Caco-2 (cell line): ENCODE measurements at regions of chr19 and their contacts with region 1.

Region 1: DNA sequence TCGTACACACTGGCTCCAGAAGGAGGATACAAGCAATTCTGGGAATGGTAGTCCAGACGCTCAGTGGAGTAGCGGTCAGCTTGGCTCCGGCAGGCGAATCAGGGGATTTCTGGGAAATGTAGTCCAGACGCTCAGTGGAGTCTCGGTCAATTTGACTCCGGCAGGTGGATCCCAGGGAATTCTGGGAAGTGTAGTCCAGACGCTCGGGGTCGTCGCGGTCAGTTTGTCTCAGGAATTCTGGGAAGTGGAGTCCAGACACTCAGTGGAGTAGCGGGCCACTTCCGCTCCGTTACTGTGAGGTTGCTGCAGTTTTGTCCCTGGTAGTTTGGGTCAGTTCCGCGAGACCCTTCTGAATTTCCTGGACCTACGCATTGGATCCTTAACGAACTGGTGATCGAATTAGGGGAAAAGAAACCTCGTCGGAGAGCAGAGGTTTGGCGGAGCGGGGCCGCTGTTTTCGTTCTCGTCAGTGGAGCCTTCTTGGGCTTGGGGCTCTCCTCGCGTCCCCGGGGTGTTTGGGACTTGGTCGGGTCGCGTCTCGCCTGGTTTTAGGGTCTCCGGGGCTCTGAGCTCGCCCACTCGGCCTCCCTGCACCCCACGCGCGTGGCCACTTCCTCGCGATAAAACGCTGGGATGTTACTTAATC is at the start of gene ZNF225:
- DNase-seq: peak; percentile 96 to 98
- H3K4me3 ChIP-seq: peak within 1 kb of the TSS; percentile 88
- H3K4me3 Mint-ChIP-seq: peak within 1 kb of the TSS; percentile 91
- H3K27ac Mint-ChIP-seq: peak within 1 kb of the TSS; percentile 75
- H3K4me1 ChIP-seq: no peaks in the 10 kb centered on the region
- H3K4me1 Mint-ChIP-seq: peaks cover 7% of the 10 kb centered on the region
- H3K27me3 ChIP-seq: no peaks in the 10 kb centered on the region
- H3K27me3 Mint-ChIP-seq: no peaks in the 10 kb centered on the region
- CTCF ChIP-seq: no peak
- total RNA-seq, gene ZNF225: 4.3 and 4.8 TPM in 2 replicates

Region 2: GRCh38 chr19:43826787-43827754 is 286.2 kb before region 1 on chr19 and contains the start of gene ZNF283:
- CTCF ChIA-PET with region 1: no interaction called
- POLR2A ChIA-PET with region 1: no interaction called
- intact Hi-C with region 1: loop called (anchors 10 kb)
- DNase-seq: peak; percentile 95 to 96
- H3K4me3 ChIP-seq: peak within 1 kb of the TSS; percentile 91
- H3K4me3 Mint-ChIP-seq: peak within 1 kb of the TSS; percentile 94
- H3K27ac Mint-ChIP-seq: peak within 1 kb of the TSS; percentile 76
- H3K4me1 ChIP-seq: no peaks in the 10 kb centered on the region
- H3K4me1 Mint-ChIP-seq: peaks cover 7% of the 10 kb centered on the region
- H3K27me3 ChIP-seq: no peaks in the 10 kb centered on the region
- H3K27me3 Mint-ChIP-seq: no peaks in the 10 kb centered on the region
- CTCF ChIP-seq: no peak
- total RNA-seq, gene ZNF283: 12.0 and 14.7 TPM in 2 replicates

Region 3: GRCh38 chr19:44002566-44003460 is 110.4 kb before region 1 on chr19 and contains the start of gene ZNF230:
- CTCF ChIA-PET with region 1: no interaction called
- POLR2A ChIA-PET with region 1: no interaction called
- intact Hi-C with region 1: loop called (anchors 1 kb)
- DNase-seq: peak; percentile 93 to 95
- H3K4me3 ChIP-seq: peak within 1 kb of the TSS; percentile 50
- H3K4me3 Mint-ChIP-seq: peak within 1 kb of the TSS; percentile 89
- H3K27ac Mint-ChIP-seq: peak within 1 kb of the TSS; percentile 91
- H3K4me1 ChIP-seq: no peaks in the 10 kb centered on the region; the same call in 1 of the 2 replicates
- H3K4me1 Mint-ChIP-seq: peaks cover 15% of the 10 kb centered on the region
- H3K27me3 ChIP-seq: no peaks in the 10 kb centered on the region
- H3K27me3 Mint-ChIP-seq: no peaks in the 10 kb centered on the region
- CTCF ChIP-seq: no peak
- total RNA-seq, gene ZNF230: 5.1 and 5.5 TPM in 2 replicates

Region 4: DNA sequence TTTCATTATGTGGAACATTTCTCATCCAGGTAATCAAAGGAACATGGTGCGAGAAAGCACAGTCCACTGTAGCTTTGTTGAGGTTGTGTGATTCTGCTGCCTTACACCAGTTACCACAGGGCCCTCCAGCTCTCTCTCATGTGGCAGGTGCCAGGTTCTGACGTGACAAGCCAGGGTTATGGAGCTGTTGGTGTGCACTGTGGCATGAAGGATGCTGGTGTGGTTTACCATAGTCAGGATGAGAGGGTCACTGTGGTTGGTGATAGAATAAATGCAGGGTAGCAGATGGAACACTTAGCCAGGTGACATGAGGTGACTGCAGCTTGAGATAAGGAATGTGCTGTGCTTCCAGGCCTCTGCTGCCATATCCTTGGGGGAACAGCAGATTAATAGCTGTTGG is 54.0 kb before region 1 on chr19:
- CTCF ChIA-PET with region 1: no interaction called
- POLR2A ChIA-PET with region 1: no interaction called
- intact Hi-C with region 1: no loop called
- DNase-seq: no peak
- H3K4me3 ChIP-seq: no peak overlapping the region
- H3K4me3 Mint-ChIP-seq: no peak overlapping the region
- H3K27ac Mint-ChIP-seq: no peak overlapping the region
- H3K4me1 ChIP-seq: no peaks in the 10 kb centered on the region
- H3K4me1 Mint-ChIP-seq: peaks cover 3% of the 10 kb centered on the region
- H3K27me3 ChIP-seq: no peaks in the 10 kb centered on the region
- H3K27me3 Mint-ChIP-seq: no peaks in the 10 kb centered on the region
- CTCF ChIP-seq: no peak

Region 5: GRCh38 chr19:44071824-44072542 is 41.3 kb before region 1 on chr19 and contains the start of gene ZNF284:
- CTCF ChIA-PET with region 1: interaction called, 3 read pairs
- POLR2A ChIA-PET with region 1: no interaction called
- intact Hi-C with region 1: loop called (anchors 1 kb)
- DNase-seq: peak; percentile 91 to 94
- H3K4me3 ChIP-seq: peak within 1 kb of the TSS; percentile 77
- H3K4me3 Mint-ChIP-seq: peak within 1 kb of the TSS; percentile 83
- H3K27ac Mint-ChIP-seq: peak within 1 kb of the TSS; percentile 85
- H3K4me1 ChIP-seq: peaks cover 3% of the 10 kb centered on the region; the same call in 1 of the 2 replicates
- H3K4me1 Mint-ChIP-seq: peaks cover 14% of the 10 kb centered on the region
- H3K27me3 ChIP-seq: no peaks in the 10 kb centered on the region
- H3K27me3 Mint-ChIP-seq: no peaks in the 10 kb centered on the region
- CTCF ChIP-seq: no peak
- total RNA-seq, gene ZNF284: 2.3 and 3.6 TPM in 2 replicates

Region 6: GRCh38 chr19:44141191-44142058 is 28.2 kb after region 1 on chr19 and contains the start of gene ZNF234:
- CTCF ChIA-PET with region 1: no interaction called
- POLR2A ChIA-PET with region 1: no interaction called
- intact Hi-C with region 1: loop called (anchors 1 kb)
- DNase-seq: peak; percentile 88 to 92
- H3K4me3 ChIP-seq: peak within 1 kb of the TSS; percentile 80
- H3K4me3 Mint-ChIP-seq: peak within 1 kb of the TSS; percentile 84
- H3K27ac Mint-ChIP-seq: peak within 1 kb of the TSS; percentile 54
- H3K4me1 ChIP-seq: 0 out of 2 replicates have a peak, but pooled peaks cover 4% of the 10 kb centered on the region
- H3K4me1 Mint-ChIP-seq: no peaks in the 10 kb centered on the region
- H3K27me3 ChIP-seq: no peaks in the 10 kb centered on the region
- H3K27me3 Mint-ChIP-seq: peaks cover 9% of the 10 kb centered on the region
- CTCF ChIP-seq: no peak
- total RNA-seq, gene ZNF234: 9.4 and 13.3 TPM in 2 replicates

Region 7: DNA sequence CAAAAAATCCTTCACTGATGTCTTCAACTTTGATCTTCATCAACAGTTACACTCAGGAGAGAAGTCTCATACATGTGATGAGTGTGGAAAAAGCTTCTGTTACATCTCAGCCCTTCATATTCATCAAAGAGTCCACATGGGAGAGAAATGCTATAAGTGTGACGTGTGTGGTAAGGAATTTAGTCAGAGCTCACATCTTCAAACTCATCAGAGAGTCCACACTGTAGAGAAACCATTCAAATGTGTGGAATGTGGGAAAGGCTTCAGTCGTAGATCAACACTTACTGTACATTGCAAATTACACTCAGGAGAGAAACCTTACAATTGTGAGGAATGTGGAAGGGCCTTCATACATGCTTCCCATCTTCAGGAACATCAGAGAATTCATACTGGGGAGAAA is 43.2 kb after region 1 on chr19:
- CTCF ChIA-PET with region 1: no interaction called
- POLR2A ChIA-PET with region 1: no interaction called
- intact Hi-C with region 1: no loop called
- DNase-seq: no peak
- H3K4me3 ChIP-seq: no peak overlapping the region
- H3K4me3 Mint-ChIP-seq: no peak overlapping the region
- H3K27ac Mint-ChIP-seq: no peak overlapping the region
- H3K4me1 ChIP-seq: no peaks in the 10 kb centered on the region
- H3K4me1 Mint-ChIP-seq: no peaks in the 10 kb centered on the region
- H3K27me3 ChIP-seq: no peaks in the 10 kb centered on the region
- H3K27me3 Mint-ChIP-seq: no peaks in the 10 kb centered on the region
- CTCF ChIP-seq: no peak

Region 8: DNA sequence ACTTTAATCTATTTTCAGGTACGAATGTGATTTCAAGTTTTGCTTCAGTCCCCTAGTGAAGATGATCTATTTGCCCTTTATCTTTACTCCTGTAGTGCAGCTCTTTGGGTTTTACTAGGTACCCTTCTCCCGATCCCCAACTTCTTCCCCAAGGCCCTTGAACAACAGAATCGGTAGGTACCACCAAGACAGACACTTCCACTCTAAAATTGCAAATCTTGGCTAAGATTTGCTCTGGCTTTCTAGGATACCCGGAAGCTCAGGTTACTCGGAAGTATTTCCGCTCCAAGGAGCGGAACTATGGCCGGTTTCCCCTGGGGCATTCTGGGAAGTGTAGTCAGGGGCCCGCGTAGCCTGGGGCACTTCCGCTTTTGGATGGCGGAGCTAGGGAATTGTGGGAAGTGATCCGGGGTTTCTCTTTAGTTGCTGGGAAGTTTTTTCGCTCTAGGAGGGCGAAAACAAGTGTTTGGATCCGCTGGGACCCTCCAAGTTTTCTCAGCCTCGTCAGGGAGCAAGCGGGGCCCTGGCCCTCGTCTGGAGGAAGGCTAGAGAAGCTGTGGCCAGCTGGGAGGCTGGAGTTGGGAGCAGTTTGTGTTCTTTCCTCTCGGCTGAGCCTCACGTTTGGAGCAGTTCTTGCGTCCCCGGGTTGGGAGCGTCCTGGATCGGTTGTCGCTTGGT is 94.0 kb after region 1 on chr19:
- CTCF ChIA-PET with region 1: no interaction called
- POLR2A ChIA-PET with region 1: no interaction called
- intact Hi-C with region 1: loop called (anchors 1 kb)
- DNase-seq: peak; percentile 95 to 96
- H3K4me3 ChIP-seq: peak overlapping the region; percentile 43
- H3K4me3 Mint-ChIP-seq: peak overlapping the region; percentile 89
- H3K27ac Mint-ChIP-seq: peak overlapping the region; percentile 80
- H3K4me1 ChIP-seq: no peaks in the 10 kb centered on the region
- H3K4me1 Mint-ChIP-seq: peaks cover 6% of the 10 kb centered on the region
- H3K27me3 ChIP-seq: no peaks in the 10 kb centered on the region
- H3K27me3 Mint-ChIP-seq: peaks cover under 1% of the 10 kb centered on the region
- CTCF ChIP-seq: no peak

Region 9: GRCh38 chr19:44304659-44305193 is 191.5 kb after region 1 on chr19 and contains the start of gene ZNF235:
- CTCF ChIA-PET with region 1: no interaction called
- POLR2A ChIA-PET with region 1: no interaction called
- intact Hi-C with region 1: loop called (anchors 1 kb)
- DNase-seq: peak; percentile 90 to 93
- H3K4me3 ChIP-seq: peak within 1 kb of the TSS; percentile 75
- H3K4me3 Mint-ChIP-seq: peak within 1 kb of the TSS; percentile 84
- H3K27ac Mint-ChIP-seq: peak within 1 kb of the TSS; percentile 60
- H3K4me1 ChIP-seq: peaks cover 6% of the 10 kb centered on the region; the same call in 1 of the 2 replicates
- H3K4me1 Mint-ChIP-seq: no peaks in the 10 kb centered on the region
- H3K27me3 ChIP-seq: no peaks in the 10 kb centered on the region
- H3K27me3 Mint-ChIP-seq: no peaks in the 10 kb centered on the region
- CTCF ChIP-seq: no peak
- total RNA-seq, gene ZNF235: 9.2 and 9.5 TPM in 2 replicates